ENCODE measurements at regions of chr10 and their contacts with region 1.

Region 1: GRCh38 chr10:48981310-48981907 is 41.8 kb upstream of the LRRC18 start:
- DNase-seq: peak in 2 of 3 donors; percentile 52 to 58
- ATAC-seq: peak; percentile 81
- H3K4me3 ChIP-seq: no peak overlapping the region
- H3K4me1 ChIP-seq: no peaks in the 10 kb centered on the region
- CTCF ChIP-seq: peak; percentile 58

Region 2: DNA sequence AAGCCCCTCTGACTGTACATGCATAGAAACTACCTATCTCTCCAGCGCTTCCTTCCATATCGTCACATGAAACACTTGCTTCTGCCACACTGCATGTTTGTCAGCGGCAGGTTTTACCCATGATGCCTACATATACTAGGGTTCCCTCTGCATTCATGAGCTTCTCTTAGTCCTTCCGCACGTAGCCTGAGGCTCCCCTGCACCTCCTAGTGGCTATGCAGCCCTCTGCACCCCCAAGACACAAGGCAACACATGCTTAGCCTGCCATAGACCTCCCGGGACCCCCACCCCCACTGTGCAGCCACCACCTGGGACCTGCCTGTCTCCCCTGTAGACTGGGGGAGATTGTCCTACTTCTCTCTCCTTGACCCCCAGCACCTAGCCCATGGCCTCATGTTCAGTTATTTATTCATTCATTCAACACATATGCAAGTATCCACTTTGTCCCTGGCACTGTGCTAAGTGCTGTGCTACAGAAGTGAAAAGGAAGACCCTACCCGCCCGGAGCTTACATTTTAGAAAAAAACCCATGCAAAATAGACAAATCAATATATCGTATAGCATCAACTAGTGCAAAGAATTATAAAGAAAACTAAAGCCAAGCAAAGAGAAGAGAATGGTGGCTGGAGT is 183.3 kb after region 1 on chr10:
- intact Hi-C with region 1: loop called in 1 of 2 experiments (anchors 10 kb)
- DNase-seq: peak in 2 of 3 donors; percentile 48
- ATAC-seq: peak; percentile 60
- H3K4me3 ChIP-seq: no peak overlapping the region
- H3K4me1 ChIP-seq: no peaks in the 10 kb centered on the region
- CTCF ChIP-seq: no peak